ENCODE measurements at regions of chr6 and their contacts with region 1.

Region 1: DNA sequence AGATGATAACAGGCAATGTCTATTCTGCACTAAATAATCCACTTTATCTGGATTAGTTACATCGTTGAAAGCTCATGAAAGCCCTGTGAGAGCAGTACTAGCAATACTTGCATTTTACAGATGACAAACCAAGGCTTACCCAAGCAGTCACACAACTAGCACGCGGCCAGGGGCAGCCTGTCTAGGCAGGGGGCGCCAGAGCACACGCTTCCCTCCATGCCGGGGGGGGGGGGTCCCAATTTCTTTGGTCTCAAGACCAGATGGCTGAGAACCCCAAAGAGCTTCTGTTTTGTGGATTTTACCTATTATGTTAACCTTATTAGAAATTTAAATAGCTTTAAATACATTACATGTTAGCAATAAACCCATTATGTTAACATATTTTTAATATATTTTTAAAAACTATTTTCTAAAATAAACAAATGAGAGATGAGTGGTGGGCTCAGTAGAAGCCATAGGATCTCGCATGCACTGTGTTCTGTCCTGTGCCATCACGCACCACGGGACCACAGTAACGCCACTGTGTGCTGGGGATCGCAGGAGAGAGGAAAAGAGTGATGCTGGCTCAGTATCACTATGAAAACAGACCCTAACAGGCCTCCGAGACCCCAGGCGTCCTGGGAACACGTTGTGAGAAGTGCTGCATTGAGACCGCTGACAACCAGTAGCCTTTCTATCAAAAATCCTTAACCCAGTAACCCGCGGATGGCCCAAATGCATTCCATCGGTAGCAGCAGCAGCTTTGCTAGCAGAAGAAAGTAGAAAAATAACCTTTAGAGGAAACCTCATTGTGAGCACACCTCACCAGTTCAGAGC is 5.3 kb upstream of the PRR18 start:
- DNase-seq: peak; percentile 71
- H3K4me3 Mint-ChIP-seq: no peak overlapping the region
- H3K27ac Mint-ChIP-seq: no peak overlapping the region
- H3K4me1 Mint-ChIP-seq: peaks cover 4% of the 10 kb centered on the region
- H3K27me3 Mint-ChIP-seq: peaks cover 16% of the 10 kb centered on the region

Region 2: GRCh38 chr6:166275714-166276166 is 37.7 kb before region 1 on chr6:
- CTCF ChIA-PET with region 1: interaction called, 6 read pairs
- intact Hi-C with region 1: loop called (anchors 2 kb)
- DNase-seq: peak; percentile 78
- H3K4me3 Mint-ChIP-seq: no peak overlapping the region
- H3K27ac Mint-ChIP-seq: no peak overlapping the region
- H3K4me1 Mint-ChIP-seq: peaks cover 3% of the 10 kb centered on the region
- H3K27me3 Mint-ChIP-seq: no peaks in the 10 kb centered on the region

Region 3: GRCh38 chr6:166377721-166378120 is 64.3 kb after region 1 on chr6:
- CTCF ChIA-PET with region 1: interaction called, 17 read pairs
- intact Hi-C with region 1: loop called (anchors 1 kb)
- DNase-seq: no peak
- H3K4me3 Mint-ChIP-seq: no peak overlapping the region
- H3K27ac Mint-ChIP-seq: no peak overlapping the region
- H3K4me1 Mint-ChIP-seq: peaks cover 3% of the 10 kb centered on the region
- H3K27me3 Mint-ChIP-seq: no peaks in the 10 kb centered on the region